ENCODE measurements at regions of chr1 and their contacts with region 1.

Region 1: GRCh38 chr1:73839922-73840321 is 358.1 kb downstream of the LRRIQ3 start:
- DNase-seq: peak; percentile 48
- ATAC-seq: no peak
- H3K4me3 ChIP-seq: no peak overlapping the region
- H3K27ac ChIP-seq: no peak overlapping the region
- H3K4me1 ChIP-seq: no peaks in the 10 kb centered on the region
- H3K27me3 ChIP-seq: no peaks in the 10 kb centered on the region
- CTCF ChIP-seq: peak; percentile 76

Region 2: DNA sequence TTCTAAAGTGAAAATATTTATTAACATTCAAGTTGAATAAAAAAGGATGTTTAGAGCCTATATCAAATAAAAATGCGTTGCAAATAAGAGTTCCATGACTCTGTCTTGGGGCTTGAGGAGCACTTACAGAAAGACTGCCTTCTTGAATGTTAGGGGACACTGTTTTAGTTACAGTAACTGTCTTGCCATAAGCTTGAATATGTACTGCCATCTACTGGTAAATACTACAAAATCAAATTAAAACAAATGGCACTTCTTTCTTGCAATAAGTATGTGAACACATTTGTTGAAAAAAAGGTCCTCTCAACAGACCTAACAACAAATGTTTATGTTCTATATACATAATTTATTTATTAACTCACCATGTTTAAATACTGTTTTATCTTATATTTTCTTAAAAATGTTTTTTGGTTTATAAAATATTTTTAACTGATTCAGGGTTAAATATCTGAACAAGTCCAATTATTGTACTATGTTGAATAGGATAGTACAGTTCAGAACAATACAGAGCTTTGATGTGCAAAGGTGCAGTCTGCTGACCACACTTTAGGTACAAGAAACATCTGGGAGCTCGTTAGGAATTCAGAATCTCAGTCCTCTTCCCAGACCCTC is 158.5 kb after region 1 on chr1:
- CTCF ChIA-PET with region 1: no interaction called
- POLR2A ChIA-PET with region 1: no interaction called
- intact Hi-C with region 1: loop called (anchors 2 kb)
- DNase-seq: peak; percentile 68
- ATAC-seq: peak; percentile 51
- H3K4me3 ChIP-seq: no peak overlapping the region
- H3K27ac ChIP-seq: no peak overlapping the region
- H3K4me1 ChIP-seq: no peaks in the 10 kb centered on the region
- H3K27me3 ChIP-seq: no peaks in the 10 kb centered on the region
- CTCF ChIP-seq: peak; percentile 66

Region 3: GRCh38 chr1:74468982-74469603 is 629.2 kb after region 1 on chr1:
- CTCF ChIA-PET with region 1: no interaction called
- POLR2A ChIA-PET with region 1: no interaction called
- intact Hi-C with region 1: loop called (anchors 2 kb)
- DNase-seq: peak; percentile 76
- ATAC-seq: 0 out of 2 replicates have a peak, but pooled peaks have one; percentile 45
- H3K4me3 ChIP-seq: no peak overlapping the region
- H3K27ac ChIP-seq: no peak overlapping the region
- H3K4me1 ChIP-seq: peaks cover 5% of the 10 kb centered on the region; the same call in 1 of the 2 replicates
- H3K27me3 ChIP-seq: peaks cover 37% of the 10 kb centered on the region
- CTCF ChIP-seq: peak; percentile 82

Region 4: GRCh38 chr1:74504125-74504932 is 664.4 kb after region 1 on chr1:
- CTCF ChIA-PET with region 1: interaction called, 5 read pairs
- POLR2A ChIA-PET with region 1: no interaction called
- intact Hi-C with region 1: loop called (anchors 10 kb)
- DNase-seq: peak; percentile 72
- ATAC-seq: peak; percentile 91
- H3K4me3 ChIP-seq: no peak overlapping the region
- H3K27ac ChIP-seq: no peak overlapping the region
- H3K4me1 ChIP-seq: no peaks in the 10 kb centered on the region
- H3K27me3 ChIP-seq: peaks cover 30% of the 10 kb centered on the region
- CTCF ChIP-seq: peak; percentile 87